Activated CD4-positive, alpha-beta memory T cell treated with anti-CD3 and anti-CD28 coated beads for 36 hours (primary cell): ENCODE measurements at regions of chr21 and their contacts with region 1.

Region 1: GRCh38 chr21:44299458-44300261 is at the start of gene PFKL:
- DNase-seq: peak; percentile 73
- H3K4me3 Mint-ChIP-seq: peak within 1 kb of the TSS; percentile 86
- H3K27ac Mint-ChIP-seq: peak within 1 kb of the TSS; percentile 93
- H3K4me1 Mint-ChIP-seq: peaks cover 56% of the 10 kb centered on the region
- H3K27me3 Mint-ChIP-seq: no peaks in the 10 kb centered on the region
- total RNA-seq, gene PFKL: 197 to 210 TPM

Region 2: GRCh38 chr21:43805275-43805800 is 494.3 kb before region 1 on chr21:
- CTCF ChIA-PET with region 1: no interaction called
- POLR2A ChIA-PET with region 1: no interaction called
- intact Hi-C with region 1: loop called (anchors 10 kb)
- DNase-seq: no peak
- H3K4me3 Mint-ChIP-seq: no peak overlapping the region
- H3K27ac Mint-ChIP-seq: peak overlapping the region; percentile 42
- H3K4me1 Mint-ChIP-seq: no peaks in the 10 kb centered on the region
- H3K27me3 Mint-ChIP-seq: no peaks in the 10 kb centered on the region

Region 3: GRCh38 chr21:44011980-44012527 is 287.6 kb before region 1 on chr21 and contains the start of gene TRAPPC10:
- CTCF ChIA-PET with region 1: interaction called, 11 read pairs
- POLR2A ChIA-PET with region 1: no interaction called
- intact Hi-C with region 1: no loop called
- DNase-seq: peak; percentile 88
- H3K4me3 Mint-ChIP-seq: peak within 1 kb of the TSS; percentile 91
- H3K27ac Mint-ChIP-seq: peak within 1 kb of the TSS; percentile 94
- H3K4me1 Mint-ChIP-seq: peaks cover 38% of the 10 kb centered on the region
- H3K27me3 Mint-ChIP-seq: no peaks in the 10 kb centered on the region
- total RNA-seq, gene TRAPPC10: 46.1 to 50.5 TPM

Region 4: DNA sequence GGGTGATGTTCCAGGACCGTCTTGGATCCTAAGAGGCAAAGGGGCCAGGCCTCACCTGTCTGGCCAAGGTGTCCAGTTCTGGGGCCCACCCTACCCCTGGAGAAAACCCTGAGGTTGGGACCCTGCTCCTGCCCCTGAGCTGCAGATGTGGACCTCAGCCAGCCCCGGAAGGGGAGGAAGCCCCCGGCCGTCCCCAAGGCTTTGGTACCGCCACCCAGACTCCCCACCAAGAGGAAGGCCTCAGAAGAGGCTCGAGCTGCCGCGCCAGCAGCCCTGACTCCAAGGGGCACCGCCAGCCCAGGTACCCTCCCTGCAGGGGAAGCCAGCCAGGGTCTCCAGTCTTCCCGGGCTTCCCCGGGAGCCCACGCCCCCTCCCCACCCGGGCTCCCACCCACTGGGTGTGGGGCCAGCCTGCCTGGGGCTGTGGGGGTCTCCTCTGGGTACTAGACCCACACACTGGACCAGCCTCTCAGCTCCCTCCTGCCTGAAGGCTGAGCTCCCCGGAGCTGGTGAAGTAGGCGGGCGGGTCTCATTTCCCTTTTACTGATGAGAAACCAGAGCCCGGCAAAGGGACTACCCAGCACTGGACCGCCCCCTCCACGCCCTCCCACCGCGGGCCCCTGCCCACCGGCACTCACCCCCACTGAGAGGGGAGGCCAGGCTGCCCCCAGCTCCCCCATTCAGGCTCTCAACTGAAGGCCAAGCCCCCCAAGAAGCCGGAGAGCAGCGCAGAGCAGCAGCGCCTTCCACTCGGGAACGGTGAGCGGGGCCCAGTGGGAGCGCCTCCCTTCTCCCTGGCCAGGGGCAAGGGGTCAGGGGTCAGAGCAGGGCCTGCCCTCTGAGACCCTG is 12.6 kb before region 1 on chr21:
- CTCF ChIA-PET with region 1: interaction called, 11 read pairs
- POLR2A ChIA-PET with region 1: interaction called, 3 read pairs
- intact Hi-C with region 1: no loop called
- DNase-seq: no peak
- H3K4me3 Mint-ChIP-seq: no peak overlapping the region
- H3K27ac Mint-ChIP-seq: no peak overlapping the region
- H3K4me1 Mint-ChIP-seq: no peaks in the 10 kb centered on the region
- H3K27me3 Mint-ChIP-seq: peaks cover 3% of the 10 kb centered on the region

Region 5: DNA sequence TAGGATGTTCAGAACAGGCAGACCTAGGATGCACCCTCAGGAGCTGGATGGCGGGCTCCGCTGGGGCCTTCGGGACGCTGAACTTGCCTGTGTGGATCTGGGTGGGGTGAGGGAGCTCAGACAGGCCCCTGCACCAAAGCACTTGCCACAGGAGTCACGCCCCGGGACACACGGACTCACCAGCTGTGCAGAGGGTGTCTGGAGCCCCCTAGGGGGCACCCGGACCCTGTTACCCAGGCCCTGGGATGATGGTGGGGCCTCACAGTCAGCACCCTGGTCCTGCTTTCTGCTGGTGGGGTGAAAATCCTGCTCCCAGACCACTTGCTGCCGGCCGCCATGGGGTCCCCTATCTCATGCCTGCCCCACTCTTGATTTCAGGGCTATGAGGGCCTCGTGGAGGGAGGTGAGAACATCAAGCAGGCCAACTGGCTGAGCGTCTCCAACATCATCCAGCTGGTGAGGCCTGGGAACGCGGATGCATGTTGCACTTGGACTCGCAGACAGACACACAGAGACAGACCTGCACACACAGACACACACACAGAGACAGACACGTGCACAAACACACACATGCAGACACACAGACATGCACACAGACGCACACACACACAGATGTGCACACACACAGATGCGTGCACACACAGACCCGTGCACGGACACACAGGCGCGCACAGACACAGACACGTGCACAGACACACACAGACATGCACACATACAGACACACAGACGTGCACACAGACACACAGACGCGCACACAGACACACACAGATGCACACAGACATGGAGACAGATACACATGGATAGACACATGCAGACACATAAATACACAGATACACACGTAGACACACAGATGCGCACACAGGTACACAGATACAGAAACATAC is 11.2 kb after region 1 on chr21:
- CTCF ChIA-PET with region 1: interaction called, 13 read pairs
- POLR2A ChIA-PET with region 1: no interaction called
- intact Hi-C with region 1: no loop called
- DNase-seq: no peak
- H3K4me3 Mint-ChIP-seq: no peak overlapping the region
- H3K27ac Mint-ChIP-seq: no peak overlapping the region
- H3K4me1 Mint-ChIP-seq: no peaks in the 10 kb centered on the region
- H3K27me3 Mint-ChIP-seq: no peaks in the 10 kb centered on the region

Region 6: DNA sequence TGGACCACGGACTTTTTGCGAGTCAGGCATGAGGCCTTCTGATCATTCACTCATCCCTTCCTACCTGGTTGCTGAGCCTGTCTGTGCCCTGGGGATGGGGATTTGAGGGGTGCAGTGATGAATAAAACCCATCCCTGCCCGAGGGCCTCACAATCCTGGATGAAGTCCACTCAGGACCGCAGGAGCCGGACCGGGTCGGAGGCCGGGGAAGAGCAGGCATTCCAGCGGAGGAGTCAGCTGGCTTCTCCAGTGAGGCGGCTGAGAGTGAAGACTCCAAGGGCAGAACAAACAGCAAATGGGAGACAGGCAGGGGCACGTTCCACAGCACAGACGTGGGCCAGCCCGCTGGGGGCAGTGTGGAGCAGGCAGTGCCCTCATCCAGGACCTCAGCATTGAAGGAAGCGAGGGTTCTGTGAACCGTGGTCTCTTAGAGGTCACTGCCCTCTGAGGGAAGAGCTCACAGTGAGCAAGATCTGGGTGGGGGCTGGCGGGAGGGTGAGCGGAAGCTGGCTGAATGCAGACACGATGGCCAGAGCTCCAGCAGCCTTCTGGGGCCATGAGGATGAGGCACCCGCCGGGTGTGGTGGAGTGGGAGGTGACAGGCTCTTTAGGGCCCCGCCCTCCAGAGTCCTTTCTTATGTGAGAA is 144.7 kb after region 1 on chr21:
- CTCF ChIA-PET with region 1: no interaction called
- POLR2A ChIA-PET with region 1: no interaction called
- intact Hi-C with region 1: no loop called
- DNase-seq: no peak
- H3K4me3 Mint-ChIP-seq: no peak overlapping the region
- H3K27ac Mint-ChIP-seq: no peak overlapping the region
- H3K4me1 Mint-ChIP-seq: no peaks in the 10 kb centered on the region
- H3K27me3 Mint-ChIP-seq: peaks cover 6% of the 10 kb centered on the region